ENCODE measurements at regions of chr18 and their contacts with region 1.

Region 1: GRCh38 chr18:46281185-46282176 is 177.3 kb downstream of the HAUS1 start:
- DNase-seq: peak; percentile 70 to 73
- H3K4me3 ChIP-seq: no peak overlapping the region
- H3K27ac ChIP-seq: no peak overlapping the region
- H3K4me1 ChIP-seq: peaks cover 33% of the 10 kb centered on the region
- H3K27me3 ChIP-seq: no peaks in the 10 kb centered on the region
- CTCF ChIP-seq: peak; percentile 94

Region 2: GRCh38 chr18:46148810-46149209 is 132.7 kb before region 1 on chr18:
- CTCF ChIA-PET with region 1: no interaction called
- POLR2A ChIA-PET with region 1: no interaction called
- intact Hi-C with region 1: no loop called
- DNase-seq: peak; percentile 34 to 66
- H3K4me3 ChIP-seq: no peak overlapping the region
- H3K27ac ChIP-seq: peak overlapping the region; percentile 61; the same call in 1 of the 2 replicates
- H3K4me1 ChIP-seq: peaks cover 48% of the 10 kb centered on the region
- H3K27me3 ChIP-seq: no peaks in the 10 kb centered on the region
- CTCF ChIP-seq: peak; percentile 87

Region 3: DNA sequence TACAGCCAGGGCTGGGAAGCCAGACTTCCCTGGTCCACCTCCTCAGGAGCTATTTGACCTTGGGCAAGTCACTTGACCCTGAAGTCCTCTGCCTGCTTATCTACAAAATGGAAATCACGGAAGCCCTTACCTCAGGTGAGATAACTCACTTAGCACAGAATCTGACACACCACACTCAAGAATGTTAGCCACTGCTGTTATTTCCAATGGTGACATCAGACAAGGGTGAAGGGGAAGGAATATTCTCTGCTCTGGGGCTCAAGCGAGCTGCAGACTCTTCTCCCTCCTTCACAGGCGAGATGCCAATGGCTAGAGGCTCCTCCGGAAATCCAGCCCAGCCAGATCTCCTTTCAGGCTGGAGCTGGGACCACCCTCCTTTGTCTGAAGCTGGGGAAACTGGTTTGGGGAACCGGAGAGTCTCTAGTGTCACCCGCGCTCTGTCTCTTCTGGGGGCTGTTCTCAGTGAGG is 12.3 kb after region 1 on chr18:
- CTCF ChIA-PET with region 1: no interaction called
- POLR2A ChIA-PET with region 1: interaction called, 11 read pairs
- intact Hi-C with region 1: no loop called
- DNase-seq: peak; percentile 85 to 98
- H3K4me3 ChIP-seq: peak overlapping the region; percentile 45; the same call in 1 of the 2 replicates
- H3K27ac ChIP-seq: peak overlapping the region; percentile 97
- H3K4me1 ChIP-seq: peaks cover 75% of the 10 kb centered on the region
- H3K27me3 ChIP-seq: no peaks in the 10 kb centered on the region
- CTCF ChIP-seq: no peak

Region 4: DNA sequence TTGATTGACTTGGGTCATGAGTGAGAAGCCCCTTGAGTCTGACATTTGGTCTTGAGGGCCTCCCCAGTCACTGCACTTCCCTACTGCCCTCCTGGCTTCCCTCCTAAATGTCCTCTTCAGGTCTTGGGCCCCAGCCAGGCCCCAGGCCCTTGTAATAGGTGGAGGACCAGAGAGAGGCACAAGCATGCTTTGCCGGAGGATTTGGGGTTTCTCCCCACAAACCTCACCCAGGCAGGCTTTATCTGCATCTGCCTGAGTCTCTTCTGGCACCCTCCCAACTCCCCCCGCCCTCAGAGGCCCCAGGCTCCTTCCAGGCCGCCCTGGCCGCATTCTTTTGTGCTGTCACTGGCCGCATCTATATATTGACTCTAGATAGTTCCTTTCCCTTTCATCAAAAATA is 93.4 kb after region 1 on chr18:
- CTCF ChIA-PET with region 1: no interaction called
- POLR2A ChIA-PET with region 1: no interaction called
- intact Hi-C with region 1: loop called (anchors 10 kb)
- DNase-seq: peak; percentile 76 to 77
- H3K4me3 ChIP-seq: no peak overlapping the region
- H3K27ac ChIP-seq: no peak overlapping the region
- H3K4me1 ChIP-seq: peaks cover 13% of the 10 kb centered on the region; the same call in 1 of the 2 replicates
- H3K27me3 ChIP-seq: no peaks in the 10 kb centered on the region
- CTCF ChIP-seq: no peak

Region 5: GRCh38 chr18:46518438-46518837 is 237.0 kb after region 1 on chr18:
- CTCF ChIA-PET with region 1: no interaction called
- POLR2A ChIA-PET with region 1: no interaction called
- intact Hi-C with region 1: loop called (anchors 1 kb)
- DNase-seq: peak in 1 of 2 experiments; percentile 27
- H3K4me3 ChIP-seq: no peak overlapping the region
- H3K27ac ChIP-seq: no peak overlapping the region
- H3K4me1 ChIP-seq: no peaks in the 10 kb centered on the region
- H3K27me3 ChIP-seq: peaks cover 82% of the 10 kb centered on the region
- CTCF ChIP-seq: peak; percentile 48; the same call in 1 of the 2 replicates

Region 6: GRCh38 chr18:46858290-46858689 is 576.8 kb after region 1 on chr18:
- CTCF ChIA-PET with region 1: no interaction called
- POLR2A ChIA-PET with region 1: interaction called, 10 read pairs
- intact Hi-C with region 1: no loop called
- DNase-seq: no peak
- H3K4me3 ChIP-seq: no peak overlapping the region
- H3K27ac ChIP-seq: no peak overlapping the region
- H3K4me1 ChIP-seq: no peaks in the 10 kb centered on the region
- H3K27me3 ChIP-seq: no peaks in the 10 kb centered on the region
- CTCF ChIP-seq: no peak